Posterior cingulate gyrus (tissue), 11 donors: ENCODE measurements at regions of chr9 and their contacts with region 1.

Region 1: DNA sequence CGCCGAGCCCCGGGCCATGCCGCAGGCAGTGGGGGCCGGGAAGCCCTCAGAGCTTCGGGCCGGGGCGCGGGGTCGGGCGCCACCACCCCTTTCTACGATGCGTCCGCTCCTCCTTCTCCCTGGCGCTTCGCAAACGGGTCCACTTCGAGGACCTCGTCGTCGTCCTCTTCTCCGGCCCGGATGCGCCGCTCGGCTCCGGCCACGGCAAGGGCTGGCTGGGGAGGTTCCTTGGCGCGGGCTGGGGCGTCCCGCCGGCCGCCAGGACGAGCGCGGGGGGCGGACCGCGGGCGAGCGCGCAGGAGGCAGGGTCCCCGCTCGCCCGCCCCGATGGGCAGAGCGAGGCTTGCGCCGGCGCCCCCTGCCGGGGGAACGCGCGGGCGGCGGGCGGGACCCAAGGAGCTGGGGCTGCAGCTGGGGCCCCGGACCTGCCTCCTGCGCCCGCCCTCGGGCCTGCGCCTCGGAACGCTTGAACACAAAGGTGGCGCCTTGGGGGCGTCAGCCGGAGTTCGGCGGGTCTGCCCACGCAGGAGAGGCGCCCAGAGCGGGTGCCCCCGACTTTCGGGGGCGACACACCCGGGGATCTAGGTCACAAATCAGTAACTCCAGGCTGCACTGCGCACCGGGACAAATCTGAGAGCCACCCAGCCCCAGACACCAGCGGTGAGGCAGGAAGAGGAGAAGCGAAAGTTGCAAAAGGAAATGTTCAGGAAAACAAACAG is at the start of gene ROR2:
- DNase-seq: peak in 5 of 10 donors; percentile 8 to 85 (median 49)

Region 2: DNA sequence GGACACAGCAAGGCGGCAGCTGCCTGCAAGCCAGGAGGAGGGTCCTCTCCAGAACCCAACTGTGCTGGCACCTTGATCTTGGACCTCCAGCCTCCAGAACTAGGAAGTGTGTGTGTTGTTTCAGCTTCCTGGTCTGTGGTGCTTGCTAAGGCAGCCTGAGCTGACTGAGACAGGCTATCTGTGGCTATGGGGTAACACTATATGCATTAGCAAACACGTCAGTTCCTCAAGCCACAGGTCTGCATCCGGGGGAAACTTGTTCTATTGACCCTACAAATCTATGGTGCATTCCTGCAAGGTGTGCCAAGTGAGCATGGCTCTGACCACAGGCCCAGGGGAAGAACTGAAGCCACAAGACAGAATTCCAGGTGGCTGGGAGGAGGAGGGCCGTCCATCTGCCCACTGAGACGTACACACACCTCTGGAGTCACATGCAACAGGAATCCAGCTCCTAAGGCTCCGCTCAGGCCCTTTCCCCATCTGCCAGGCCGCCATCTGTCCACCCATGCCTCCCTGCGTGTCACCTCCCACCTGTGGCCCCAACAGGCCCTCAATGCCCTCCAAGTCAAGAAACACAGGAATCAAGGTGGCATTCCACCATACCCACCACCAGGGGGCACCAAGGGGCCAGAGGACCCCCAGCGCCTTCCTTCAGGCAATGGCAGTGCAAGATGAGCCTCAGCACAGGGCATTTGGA is 174.9 kb before region 1 on chr9:
- intact Hi-C with region 1: loop called (anchors 10 kb)
- DNase-seq: peak in 6 of 10 donors; percentile 46 to 93 (median 60)

Region 3: DNA sequence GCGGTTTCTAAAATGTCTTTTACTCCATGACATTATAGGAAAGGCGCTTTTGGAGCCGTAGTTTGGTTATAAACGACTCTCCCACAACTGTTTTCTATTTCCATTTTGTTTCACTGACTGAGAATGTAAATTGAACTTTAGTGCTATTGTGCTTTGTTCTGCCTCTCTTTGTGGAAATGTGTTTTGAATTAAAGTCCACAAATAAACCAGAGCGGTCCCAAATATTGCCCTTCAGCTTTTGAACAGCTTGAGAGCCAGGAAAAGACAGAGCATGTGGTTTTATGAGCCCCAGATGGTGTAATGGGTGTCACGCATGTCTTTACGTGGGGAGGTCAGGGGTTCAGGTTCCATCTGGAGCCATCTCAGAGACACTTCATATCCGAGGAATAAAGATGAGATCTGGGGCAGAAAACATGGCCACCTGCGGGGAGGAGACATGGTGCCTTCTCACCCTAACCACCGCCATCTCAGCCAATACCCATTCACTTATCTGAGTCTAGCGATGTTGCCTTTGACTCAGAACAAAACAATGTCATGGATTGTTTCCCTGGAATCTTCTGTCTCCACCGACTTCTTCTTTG is 42.4 kb after region 1 on chr9:
- intact Hi-C with region 1: no loop called
- DNase-seq: no peak